Activated naive CD4-positive, alpha-beta T cell treated with anti-CD3 and anti-CD28 coated beads, Interleukin-2, amount 10 ng/mL, durations not matched to agents 7 days and 5 days (primary cell): ENCODE measurements at regions of chr11 and their contacts with region 1.

Region 1: GRCh38 chr11:1694064-1694845 is 2.7 kb upstream of the KRTAP5-6 start:
- DNase-seq: peak; percentile 83
- H3K4me3 Mint-ChIP-seq: no peak overlapping the region
- H3K27ac Mint-ChIP-seq: no peak overlapping the region
- H3K4me1 Mint-ChIP-seq: peaks cover 2% of the 10 kb centered on the region
- H3K27me3 Mint-ChIP-seq: peaks cover 72% of the 10 kb centered on the region

Region 2: DNA sequence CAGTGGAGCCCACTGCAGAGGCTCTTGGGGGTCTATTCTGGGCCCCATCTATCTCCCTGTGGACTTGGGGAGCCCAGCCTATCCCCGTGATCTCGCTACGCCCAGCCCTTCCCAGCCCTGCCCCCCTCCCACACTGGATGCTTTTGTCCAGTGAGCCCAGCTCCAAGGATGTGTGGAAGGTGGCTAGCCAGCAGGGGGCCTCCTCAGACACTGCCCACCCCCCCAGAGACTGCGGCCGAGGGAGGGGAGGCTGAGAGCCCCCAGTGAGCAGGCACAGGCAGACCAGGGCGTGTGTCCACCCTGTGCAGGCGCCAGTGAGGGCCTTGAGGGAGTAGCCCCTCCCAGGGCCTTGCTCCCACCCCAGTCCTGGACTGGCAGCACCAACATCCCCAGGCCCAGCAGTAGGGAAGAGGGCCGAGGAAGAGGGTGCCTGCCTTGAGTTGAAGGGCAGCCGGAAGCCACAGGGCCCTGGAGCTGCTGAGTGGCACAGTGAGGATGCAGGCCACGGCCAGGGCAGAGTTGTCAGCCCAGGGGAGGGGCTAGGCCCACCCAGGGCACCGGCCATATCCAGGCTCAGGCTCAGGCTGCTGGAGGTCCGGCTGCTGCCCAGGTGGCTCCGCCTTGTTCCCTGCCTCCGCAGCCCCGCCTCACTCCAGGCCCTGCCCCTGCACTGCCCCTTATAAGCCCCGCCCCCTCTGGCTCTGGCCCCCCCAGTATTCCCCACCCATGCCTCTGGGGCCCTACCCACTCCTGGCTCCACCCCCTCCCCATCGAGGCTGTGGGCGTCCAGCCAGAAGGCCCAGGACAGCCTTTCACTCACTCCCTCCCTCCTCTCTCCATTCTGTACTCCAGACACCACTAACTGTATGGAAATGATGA is 235.7 kb before region 1 on chr11:
- CTCF ChIA-PET with region 1: no interaction called
- DNase-seq: no peak
- H3K4me3 Mint-ChIP-seq: no peak overlapping the region
- H3K27ac Mint-ChIP-seq: no peak overlapping the region
- H3K4me1 Mint-ChIP-seq: no peaks in the 10 kb centered on the region
- H3K27me3 Mint-ChIP-seq: peaks cover 6% of the 10 kb centered on the region

Region 3: GRCh38 chr11:1652771-1653540 is 41.3 kb before region 1 on chr11:
- CTCF ChIA-PET with region 1: interaction called, 30 read pairs
- DNase-seq: peak; percentile 82
- H3K4me3 Mint-ChIP-seq: no peak overlapping the region
- H3K27ac Mint-ChIP-seq: no peak overlapping the region
- H3K4me1 Mint-ChIP-seq: no peaks in the 10 kb centered on the region
- H3K27me3 Mint-ChIP-seq: peaks cover 52% of the 10 kb centered on the region

Region 4: DNA sequence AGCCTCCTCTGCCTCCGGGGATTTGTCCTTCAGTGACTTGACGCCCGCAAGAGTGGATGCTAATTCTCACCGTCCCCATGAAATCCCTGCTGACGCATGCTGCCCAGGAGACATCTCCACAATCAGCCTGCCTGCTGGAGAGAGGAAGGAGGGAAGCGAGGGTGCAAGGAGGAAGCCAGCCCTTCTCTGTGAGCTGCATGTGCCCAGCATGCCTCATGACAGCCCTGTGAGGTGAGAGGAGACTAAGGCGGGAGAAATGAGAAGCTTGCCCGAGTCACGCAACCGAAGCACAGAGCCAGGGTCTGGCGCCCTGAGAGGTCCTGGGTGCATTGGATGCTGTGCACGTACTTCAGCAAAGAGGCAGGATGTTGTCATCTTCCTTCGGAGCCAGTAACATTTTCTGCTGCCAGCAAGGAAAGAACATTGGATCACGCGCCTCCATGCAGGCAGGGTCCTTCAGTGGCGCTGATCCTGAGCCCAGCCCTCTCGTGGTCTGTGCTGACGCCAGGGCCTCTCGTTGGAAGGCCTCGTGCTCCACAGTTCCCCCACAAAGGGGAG is 24.5 kb before region 1 on chr11:
- CTCF ChIA-PET with region 1: no interaction called
- DNase-seq: no peak
- H3K4me3 Mint-ChIP-seq: no peak overlapping the region
- H3K27ac Mint-ChIP-seq: no peak overlapping the region
- H3K4me1 Mint-ChIP-seq: no peaks in the 10 kb centered on the region
- H3K27me3 Mint-ChIP-seq: peaks cover 50% of the 10 kb centered on the region

Region 5: DNA sequence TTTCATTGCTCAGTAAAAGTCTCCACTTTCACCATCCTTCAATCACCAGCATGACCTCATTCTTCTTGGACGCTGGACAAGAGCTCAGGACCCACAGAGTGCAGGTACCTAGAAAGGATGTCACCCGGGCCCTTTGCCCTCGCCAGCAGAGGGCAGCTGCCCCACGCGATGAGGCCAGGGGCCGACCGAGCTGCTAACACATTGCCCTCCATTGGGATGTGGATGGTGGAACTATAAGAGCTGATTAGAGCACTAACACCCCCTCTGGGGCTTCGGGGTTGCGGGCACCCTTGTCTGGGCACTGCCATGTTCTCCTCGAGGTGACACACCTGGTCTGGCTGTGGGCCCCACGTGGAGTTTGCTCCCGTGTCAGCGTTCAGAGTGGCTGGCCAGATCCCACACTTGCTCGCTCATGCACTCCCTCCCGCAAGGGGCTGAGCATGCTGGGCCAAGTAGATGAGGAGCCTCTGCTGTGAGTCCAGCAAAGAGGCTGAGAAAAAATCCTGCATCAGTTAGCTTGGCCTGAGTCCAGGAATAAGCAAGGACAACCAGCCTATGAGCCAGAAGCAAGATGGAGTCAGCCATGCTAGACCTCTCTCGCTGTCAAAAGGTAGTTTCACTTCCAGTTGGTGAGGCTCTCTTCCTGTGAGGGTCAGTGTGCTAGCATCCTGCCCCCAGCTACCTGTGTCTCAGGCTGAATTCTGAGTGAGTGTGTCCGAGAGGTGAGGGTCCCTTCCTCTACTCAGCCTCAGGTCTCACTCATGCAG is 12.6 kb after region 1 on chr11:
- CTCF ChIA-PET with region 1: interaction called, 18 read pairs
- DNase-seq: peak; percentile 52
- H3K4me3 Mint-ChIP-seq: no peak overlapping the region
- H3K27ac Mint-ChIP-seq: no peak overlapping the region
- H3K4me1 Mint-ChIP-seq: no peaks in the 10 kb centered on the region
- H3K27me3 Mint-ChIP-seq: peaks cover 19% of the 10 kb centered on the region

Region 6: GRCh38 chr11:1772270-1773130 is 78.2 kb after region 1 on chr11:
- CTCF ChIA-PET with region 1: interaction called, 14 read pairs
- DNase-seq: peak; percentile 56
- H3K4me3 Mint-ChIP-seq: no peak overlapping the region
- H3K27ac Mint-ChIP-seq: no peak overlapping the region
- H3K4me1 Mint-ChIP-seq: peaks cover 17% of the 10 kb centered on the region
- H3K27me3 Mint-ChIP-seq: peaks cover 35% of the 10 kb centered on the region

Region 7: GRCh38 chr11:1837171-1838076 is 143.2 kb after region 1 on chr11:
- CTCF ChIA-PET with region 1: interaction called, 341 read pairs
- DNase-seq: peak; percentile 92
- H3K4me3 Mint-ChIP-seq: no peak overlapping the region
- H3K27ac Mint-ChIP-seq: no peak overlapping the region
- H3K4me1 Mint-ChIP-seq: peaks cover 10% of the 10 kb centered on the region
- H3K27me3 Mint-ChIP-seq: peaks cover 33% of the 10 kb centered on the region

Region 8: DNA sequence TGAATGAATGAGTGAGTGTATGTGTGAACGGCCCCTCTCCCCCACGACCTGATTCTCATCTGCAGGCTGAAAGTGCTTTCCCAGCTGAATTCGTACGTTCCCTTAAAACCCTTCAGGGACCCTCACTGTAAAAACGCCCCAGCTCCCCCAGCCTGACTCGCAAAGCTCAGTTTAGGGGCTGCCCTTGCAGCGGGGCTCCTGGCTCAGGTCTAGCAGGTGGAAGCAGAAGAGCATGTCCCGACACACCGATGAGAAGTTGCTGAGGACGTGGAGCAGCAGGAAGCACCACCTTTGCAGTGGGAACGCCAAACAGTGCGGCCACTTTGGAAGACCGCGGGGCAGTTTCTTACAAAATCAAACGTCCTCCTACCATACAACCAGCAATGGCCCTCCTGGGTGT is 249.3 kb after region 1 on chr11:
- CTCF ChIA-PET with region 1: no interaction called
- DNase-seq: peak; percentile 13
- H3K4me3 Mint-ChIP-seq: no peak overlapping the region
- H3K27ac Mint-ChIP-seq: no peak overlapping the region
- H3K4me1 Mint-ChIP-seq: peaks cover 4% of the 10 kb centered on the region
- H3K27me3 Mint-ChIP-seq: peaks cover 9% of the 10 kb centered on the region

Region 9: GRCh38 chr11:2128130-2128510 is 433.9 kb after region 1 on chr11:
- CTCF ChIA-PET with region 1: no interaction called
- DNase-seq: no peak
- H3K4me3 Mint-ChIP-seq: no peak overlapping the region
- H3K27ac Mint-ChIP-seq: no peak overlapping the region
- H3K4me1 Mint-ChIP-seq: no peaks in the 10 kb centered on the region
- H3K27me3 Mint-ChIP-seq: peaks cover 35% of the 10 kb centered on the region

Region 10: DNA sequence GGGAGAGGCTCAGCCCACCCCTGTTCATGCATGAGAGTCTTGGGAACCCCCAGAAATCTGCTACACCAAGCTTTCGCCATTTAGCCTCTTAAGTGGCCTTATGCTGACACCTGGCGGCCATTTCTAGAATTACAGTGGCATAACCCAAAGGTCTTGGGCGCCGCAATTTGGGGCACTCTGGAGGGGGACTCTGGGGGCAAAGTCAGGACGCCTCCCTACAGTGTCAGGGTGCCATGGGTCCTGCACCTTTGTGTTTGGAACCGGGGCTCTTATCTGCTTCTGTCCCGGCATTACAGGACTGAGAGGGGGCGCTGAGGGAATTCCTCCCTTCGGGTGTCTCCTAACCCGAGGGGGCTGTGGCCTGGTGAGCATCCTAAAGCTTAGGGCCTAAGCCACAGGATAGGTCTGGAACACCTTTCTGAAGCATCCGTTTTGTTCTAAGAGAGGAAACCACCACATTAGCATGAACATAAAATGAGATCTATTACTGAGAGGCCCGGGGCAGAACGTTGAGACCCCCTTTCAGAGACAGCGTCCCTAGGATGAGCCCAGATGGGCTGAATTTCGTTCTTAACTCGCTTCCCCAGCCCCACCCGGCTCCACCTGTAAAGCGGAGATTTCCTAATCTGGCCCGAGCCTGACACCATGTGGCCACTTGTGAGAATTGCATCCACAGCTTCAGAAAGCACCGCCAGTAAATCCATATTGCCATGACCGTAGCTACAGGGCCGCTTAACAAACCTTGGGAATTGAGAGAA is 457.4 kb after region 1 on chr11:
- CTCF ChIA-PET with region 1: interaction called, 20 read pairs
- DNase-seq: peak; percentile 87
- H3K4me3 Mint-ChIP-seq: no peak overlapping the region
- H3K27ac Mint-ChIP-seq: no peak overlapping the region
- H3K4me1 Mint-ChIP-seq: peaks cover 6% of the 10 kb centered on the region
- H3K27me3 Mint-ChIP-seq: peaks cover 63% of the 10 kb centered on the region